AG04449 (cell line): ENCODE measurements at regions of chr5 and their contacts with region 1.

Region 1: DNA sequence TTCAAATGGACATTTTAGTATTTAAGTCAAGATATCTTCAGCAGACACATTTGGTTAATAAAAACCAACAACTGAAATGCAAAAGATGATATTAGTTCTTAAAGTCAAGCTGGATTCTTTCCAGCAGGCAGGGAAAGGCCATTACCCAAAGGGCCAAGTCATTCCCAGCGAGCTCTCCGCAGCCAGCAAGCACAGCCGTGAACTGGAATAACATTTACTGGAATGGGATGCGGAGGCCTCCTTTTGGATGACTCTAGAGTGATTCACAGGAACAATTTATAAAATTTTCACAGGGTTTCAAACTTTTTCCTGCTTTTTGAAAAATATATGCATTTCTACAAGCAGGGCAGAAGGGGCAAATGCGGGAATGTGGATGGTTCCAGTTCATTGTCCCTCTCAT is 76.6 kb upstream of the DAB2 start:
- DNase-seq: peak; percentile 73
- H3K4me3 ChIP-seq: no peak overlapping the region
- CTCF ChIP-seq: no peak

Region 2: DNA sequence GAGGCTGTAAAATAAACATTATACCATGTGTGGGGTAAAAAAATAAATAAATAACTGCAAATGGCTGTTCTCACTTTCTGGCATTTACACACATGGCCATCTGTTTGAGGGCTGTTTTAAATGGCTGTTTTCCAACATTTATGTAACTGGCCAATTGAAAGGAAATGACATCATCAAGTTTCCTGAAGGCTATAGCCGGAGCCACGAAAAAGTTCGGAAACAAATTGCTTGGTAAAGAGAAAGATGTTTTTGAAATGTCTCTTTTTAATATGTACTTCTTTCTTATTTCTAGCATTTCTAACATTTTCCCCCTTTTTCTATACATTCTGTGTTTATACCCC is 18.8 kb after region 1 on chr5:
- CTCF ChIA-PET with region 1: interaction called, 6 read pairs
- POLR2A ChIA-PET with region 1: interaction called, 12 read pairs
- DNase-seq: peak; percentile 83
- H3K4me3 ChIP-seq: no peak overlapping the region
- CTCF ChIP-seq: no peak

Region 3: DNA sequence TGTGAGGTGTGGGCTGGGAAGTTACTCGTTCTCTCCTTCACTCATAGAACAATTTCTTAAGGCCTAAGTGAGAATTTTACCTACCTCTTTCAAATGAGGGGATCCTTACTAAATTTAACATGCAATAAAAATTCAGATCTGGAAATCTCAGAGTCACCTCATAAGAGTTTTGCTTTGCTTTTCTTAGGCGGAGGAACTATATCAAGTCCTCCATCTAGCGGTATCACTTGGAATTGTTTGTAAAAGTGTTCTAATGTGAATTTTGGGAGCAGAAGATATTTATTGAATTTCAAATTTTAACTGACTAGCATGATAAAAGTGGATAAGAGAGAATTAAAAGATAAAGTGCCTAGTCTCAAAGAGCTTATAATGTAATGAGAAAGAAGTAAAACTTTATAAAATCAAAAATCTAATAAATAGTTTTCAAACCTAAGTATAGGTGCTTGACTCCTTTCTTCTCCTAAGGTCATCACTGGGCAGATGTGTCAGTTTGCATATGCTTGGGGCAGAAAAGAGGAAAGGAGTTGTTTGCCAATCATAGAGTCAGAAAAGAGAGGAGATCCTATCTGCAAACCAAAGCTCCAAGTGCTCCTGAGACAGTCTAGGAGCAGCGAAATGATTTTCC is 69.1 kb after region 1 on chr5:
- CTCF ChIA-PET with region 1: no interaction called
- POLR2A ChIA-PET with region 1: no interaction called
- DNase-seq: no peak
- H3K4me3 ChIP-seq: no peak overlapping the region
- CTCF ChIP-seq: peak; percentile 33